ENCODE measurements at regions of chr16 and their contacts with region 1.

Region 1: DNA sequence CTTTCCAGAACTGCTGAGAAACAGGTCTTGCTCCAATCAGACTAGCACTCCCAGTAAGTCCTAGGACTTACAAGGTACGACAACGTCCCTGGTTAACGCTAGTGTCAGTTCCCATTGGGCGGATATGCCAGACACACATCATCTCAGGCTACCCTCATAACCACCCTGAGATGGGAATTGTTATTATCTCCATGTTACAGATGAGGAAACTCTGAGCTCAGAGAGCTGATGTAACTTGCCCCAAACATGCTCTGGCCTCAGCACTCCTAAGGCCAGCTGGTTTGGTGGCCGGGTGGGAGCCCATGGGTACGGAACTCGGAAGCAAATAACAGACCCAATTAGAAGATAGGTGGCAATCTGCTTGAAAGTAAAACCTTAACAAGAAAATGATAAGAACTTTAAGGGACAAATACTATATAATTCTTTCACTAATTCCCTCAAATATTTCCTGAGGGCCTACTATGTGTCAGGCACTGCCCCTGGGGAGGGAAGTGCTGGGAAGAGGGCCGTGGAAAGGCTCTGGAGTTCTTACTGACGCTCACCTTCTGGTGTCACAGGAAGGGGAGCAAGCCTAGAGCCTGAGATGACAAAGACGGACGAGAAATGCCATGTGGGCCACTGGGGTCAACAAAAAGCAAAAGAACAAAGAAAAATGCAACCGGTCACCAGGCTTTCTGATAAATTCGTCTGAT is 6.9 kb downstream of the CREBBP start:
- DNase-seq: no peak
- H3K4me3 ChIP-seq: no peak overlapping the region
- H3K27ac ChIP-seq: no peak overlapping the region
- H3K4me1 ChIP-seq: peaks cover 9% of the 10 kb centered on the region
- H3K27me3 ChIP-seq: no peaks in the 10 kb centered on the region
- CTCF ChIP-seq: no peak

Region 2: GRCh38 chr16:3825103-3825502 is 48.5 kb before region 1 on chr16:
- CTCF ChIA-PET with region 1: no interaction called
- dilution Hi-C with region 1: loop called (anchors 5 kb)
- in situ Hi-C with region 1: no loop called
- intact Hi-C with region 1: no loop called
- DNase-seq: peak; percentile 35
- H3K4me3 ChIP-seq: no peak overlapping the region
- H3K27ac ChIP-seq: no peak overlapping the region
- H3K4me1 ChIP-seq: peaks cover 24% of the 10 kb centered on the region
- H3K27me3 ChIP-seq: no peaks in the 10 kb centered on the region
- CTCF ChIP-seq: no peak

Region 3: DNA sequence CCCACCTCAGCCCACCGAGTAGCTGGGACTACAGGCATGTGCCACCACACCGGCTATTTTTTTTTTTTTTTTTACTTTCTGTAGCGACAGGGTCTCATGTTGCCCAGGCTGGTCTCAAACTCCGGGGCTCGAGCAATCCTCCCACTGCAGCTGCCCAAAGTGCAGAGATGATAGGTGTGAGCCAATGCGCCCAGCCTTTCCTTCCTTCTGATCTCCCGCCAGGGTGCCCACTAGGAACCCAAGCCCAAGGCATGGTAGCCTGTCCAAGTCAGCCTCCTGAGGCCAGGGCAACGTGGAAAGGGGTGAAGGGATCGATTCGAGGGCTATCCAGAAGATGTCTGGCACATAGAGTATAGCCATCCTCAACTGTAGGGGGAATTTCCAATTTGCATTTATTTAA is 16.5 kb after region 1 on chr16:
- CTCF ChIA-PET with region 1: no interaction called
- dilution Hi-C with region 1: no loop called
- in situ Hi-C with region 1: no loop called
- intact Hi-C with region 1: no loop called
- DNase-seq: no peak
- H3K4me3 ChIP-seq: no peak overlapping the region
- H3K27ac ChIP-seq: no peak overlapping the region
- H3K4me1 ChIP-seq: no peaks in the 10 kb centered on the region
- H3K27me3 ChIP-seq: no peaks in the 10 kb centered on the region
- CTCF ChIP-seq: no peak